Activated CD4-positive, alpha-beta memory T cell treated with anti-CD3 and anti-CD28 coated beads, Interleukin-2, amount 10 ng/mL, durations not matched to agents 7 days and 5 days (primary cell): ENCODE measurements at regions of chr1 and their contacts with region 1.

Region 1: DNA sequence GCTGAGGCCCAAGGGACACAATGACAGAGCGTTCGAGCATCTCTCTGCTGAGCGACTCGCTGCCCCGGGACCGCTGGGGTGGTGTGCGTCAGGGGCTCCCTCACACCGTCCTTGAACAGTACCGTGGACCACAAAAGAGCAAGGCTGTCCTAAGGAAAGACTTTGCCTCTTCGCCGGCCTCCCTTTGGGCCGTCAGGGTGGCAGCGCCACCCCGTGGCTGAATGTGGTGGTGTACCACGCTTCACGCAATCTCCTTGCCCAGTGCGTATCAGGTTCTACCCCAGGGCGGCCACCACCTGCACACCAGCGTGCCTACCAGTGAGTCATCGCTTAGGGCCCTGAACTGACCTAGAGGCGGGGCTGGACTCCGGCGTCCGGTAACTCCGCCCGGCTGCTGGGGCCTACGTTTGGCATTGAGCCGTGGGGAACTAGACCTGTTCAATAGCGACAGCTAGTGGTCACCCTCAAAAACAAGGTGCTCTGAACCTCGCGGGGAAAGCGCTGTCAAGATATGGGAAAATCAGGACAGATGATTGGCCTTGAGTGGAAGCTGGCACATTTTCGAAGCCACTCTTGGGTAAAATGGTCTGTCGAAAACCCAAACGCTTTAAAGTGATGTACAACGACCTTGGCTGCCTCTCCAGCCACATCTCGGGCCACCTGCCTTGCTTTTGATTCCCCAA is 8.1 kb upstream of the TRAF3IP3 start:
- DNase-seq: peak; percentile 92
- H3K4me3 Mint-ChIP-seq: peak overlapping the region; percentile 68
- H3K27ac Mint-ChIP-seq: peak overlapping the region; percentile 91
- H3K4me1 Mint-ChIP-seq: peaks cover 70% of the 10 kb centered on the region
- H3K27me3 Mint-ChIP-seq: no peaks in the 10 kb centered on the region

Region 2: DNA sequence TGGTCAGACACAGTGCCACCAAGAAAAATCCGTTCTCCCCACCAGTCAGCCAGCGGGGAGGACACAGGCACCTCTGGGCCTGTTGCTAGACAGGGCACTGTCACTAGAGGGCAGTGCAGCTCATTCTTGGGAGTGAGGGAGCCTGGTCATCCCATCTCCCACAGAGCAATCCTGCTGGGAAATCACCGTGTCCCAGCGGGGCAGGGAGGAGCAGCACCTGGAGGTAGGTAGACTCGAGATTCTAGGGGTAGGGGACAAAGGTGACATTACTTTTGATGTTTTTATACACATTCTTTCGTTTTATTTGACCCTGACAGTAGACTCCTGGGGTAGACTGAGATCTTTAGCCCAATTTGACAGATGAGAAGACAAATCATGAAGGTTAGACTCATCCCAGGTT is 170.9 kb before region 1 on chr1:
- CTCF ChIA-PET with region 1: interaction called, 23 read pairs
- POLR2A ChIA-PET with region 1: no interaction called
- DNase-seq: peak; percentile 74
- H3K4me3 Mint-ChIP-seq: no peak overlapping the region
- H3K27ac Mint-ChIP-seq: no peak overlapping the region
- H3K4me1 Mint-ChIP-seq: no peaks in the 10 kb centered on the region
- H3K27me3 Mint-ChIP-seq: peaks cover 24% of the 10 kb centered on the region

Region 3: GRCh38 chr1:209674957-209675564 is 72.7 kb before region 1 on chr1 and contains the start of gene G0S2:
- CTCF ChIA-PET with region 1: interaction called, 11 read pairs
- POLR2A ChIA-PET with region 1: interaction called, 5 read pairs
- DNase-seq: peak; percentile 50
- H3K4me3 Mint-ChIP-seq: peak within 1 kb of the TSS; percentile 65
- H3K27ac Mint-ChIP-seq: peak within 1 kb of the TSS; percentile 80
- H3K4me1 Mint-ChIP-seq: peaks cover 73% of the 10 kb centered on the region
- H3K27me3 Mint-ChIP-seq: peaks cover 28% of the 10 kb centered on the region
- total RNA-seq, gene G0S2: 7.3 to 7.6 TPM

Region 4: DNA sequence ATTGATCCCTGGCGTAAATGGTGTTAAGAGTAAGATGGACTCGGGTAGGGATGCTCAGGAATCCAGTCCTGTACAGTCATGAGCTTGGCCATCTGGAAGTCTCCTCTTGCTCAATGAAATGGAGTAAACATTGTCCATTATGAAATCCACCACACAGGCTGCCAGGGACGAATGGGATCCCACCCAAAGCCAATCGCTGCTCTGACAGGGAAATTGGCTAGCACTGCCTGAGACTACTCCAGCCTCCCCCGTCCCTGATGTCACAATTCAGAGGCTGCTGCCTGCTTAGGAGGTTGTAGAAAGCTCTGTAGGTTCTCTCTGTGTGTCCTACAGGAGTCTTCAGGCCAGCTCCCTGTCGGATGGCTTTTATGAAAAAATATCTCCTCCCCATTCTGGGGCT is 43.1 kb before region 1 on chr1 and contains the start of gene HSD11B1:
- CTCF ChIA-PET with region 1: interaction called, 10 read pairs
- POLR2A ChIA-PET with region 1: no interaction called
- DNase-seq: no peak
- H3K4me3 Mint-ChIP-seq: no peak within 1 kb of the TSS
- H3K27ac Mint-ChIP-seq: peak within 1 kb of the TSS; percentile 11
- H3K4me1 Mint-ChIP-seq: peaks cover 61% of the 10 kb centered on the region
- H3K27me3 Mint-ChIP-seq: peaks cover 2% of the 10 kb centered on the region
- total RNA-seq, gene HSD11B1: 8.7 to 11.4 TPM

Region 5: DNA sequence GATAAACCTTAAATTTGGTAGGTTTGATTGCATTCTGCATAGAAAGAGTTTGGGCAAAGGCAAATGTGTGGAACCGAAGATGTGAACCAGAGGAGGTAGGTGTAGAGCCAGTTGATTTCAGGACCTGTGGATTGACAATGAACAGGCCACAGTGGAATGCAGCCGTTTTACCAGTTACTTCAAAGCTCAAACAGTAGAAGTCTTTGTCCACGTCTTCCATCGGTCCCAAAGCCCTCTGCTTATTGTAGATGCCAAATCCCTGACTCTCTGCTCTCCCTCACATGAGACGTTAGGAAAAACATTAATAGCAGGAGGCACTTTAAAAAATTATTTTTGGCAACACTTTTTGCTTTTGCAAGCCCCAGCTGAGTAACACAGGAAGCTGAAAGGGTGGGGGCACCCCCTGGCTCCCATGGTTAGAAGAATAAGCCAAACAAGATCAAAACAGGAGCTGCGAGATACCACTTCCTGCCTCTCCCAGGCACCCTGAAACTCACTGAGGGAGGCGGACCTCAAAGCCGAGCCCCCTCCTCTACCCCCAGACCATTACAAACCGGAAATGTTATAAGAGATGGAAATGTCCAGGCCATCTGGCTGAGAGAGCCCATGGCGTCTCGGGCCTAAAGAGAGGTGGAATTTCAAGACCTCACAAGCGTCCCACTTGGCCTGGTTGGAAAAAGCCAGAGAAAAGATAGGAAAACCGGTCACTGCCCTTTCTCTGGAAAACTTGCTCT is 21.6 kb after region 1 on chr1:
- CTCF ChIA-PET with region 1: interaction called, 115 read pairs
- POLR2A ChIA-PET with region 1: interaction called, 799 read pairs
- DNase-seq: peak; percentile 87
- H3K4me3 Mint-ChIP-seq: no peak overlapping the region
- H3K27ac Mint-ChIP-seq: no peak overlapping the region
- H3K4me1 Mint-ChIP-seq: peaks cover 37% of the 10 kb centered on the region
- H3K27me3 Mint-ChIP-seq: no peaks in the 10 kb centered on the region

Region 6: DNA sequence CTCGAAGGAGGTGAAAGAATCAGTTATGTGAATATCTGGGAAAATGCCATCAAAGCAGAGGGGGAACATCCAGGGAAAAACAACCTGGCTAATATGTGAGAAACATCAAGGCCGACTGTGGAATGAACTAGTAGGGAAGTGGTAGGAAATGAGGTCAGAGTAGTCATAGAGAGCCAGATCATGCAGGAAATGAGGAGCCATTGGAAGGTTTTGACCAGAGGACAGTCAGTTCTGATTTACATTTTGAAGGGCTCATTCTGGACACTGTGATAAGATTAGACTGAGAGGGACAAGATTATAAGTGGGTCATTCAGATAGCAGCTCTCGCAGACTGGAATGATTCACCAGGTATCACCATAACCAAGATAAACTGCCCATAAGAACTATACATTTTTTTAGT is 254.0 kb after region 1 on chr1:
- CTCF ChIA-PET with region 1: no interaction called
- POLR2A ChIA-PET with region 1: no interaction called
- DNase-seq: no peak
- H3K4me3 Mint-ChIP-seq: no peak overlapping the region
- H3K27ac Mint-ChIP-seq: no peak overlapping the region
- H3K4me1 Mint-ChIP-seq: no peaks in the 10 kb centered on the region
- H3K27me3 Mint-ChIP-seq: peaks cover 12% of the 10 kb centered on the region